PC-9 (cell line): ENCODE measurements at regions of chr3 and their contacts with region 1.

Region 1: DNA sequence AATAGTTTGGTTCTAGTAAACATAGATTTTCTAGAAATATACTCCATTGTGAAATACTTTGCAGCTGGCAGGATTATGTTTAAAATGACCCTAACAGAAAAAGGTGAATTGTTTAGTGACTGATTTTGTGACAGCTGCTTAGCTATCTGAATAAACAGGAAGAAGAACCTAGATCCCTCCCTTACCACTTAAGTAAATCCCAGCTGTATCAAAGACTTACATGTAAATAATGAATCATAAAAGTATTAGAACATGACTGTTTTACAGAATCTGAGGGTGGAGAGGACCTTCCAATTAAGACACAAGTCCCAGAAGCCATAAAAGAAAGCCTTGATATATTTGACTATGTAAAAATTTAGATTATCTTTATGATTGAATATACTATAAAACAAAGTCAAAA is 15.9 kb downstream of the SLC49A4 start:
- DNase-seq: no peak
- H3K4me3 ChIP-seq: no peak overlapping the region
- H3K27ac ChIP-seq: no peak overlapping the region
- H3K4me1 ChIP-seq: no peaks in the 10 kb centered on the region
- H3K27me3 ChIP-seq: no peaks in the 10 kb centered on the region
- CTCF ChIP-seq: no peak

Region 2: DNA sequence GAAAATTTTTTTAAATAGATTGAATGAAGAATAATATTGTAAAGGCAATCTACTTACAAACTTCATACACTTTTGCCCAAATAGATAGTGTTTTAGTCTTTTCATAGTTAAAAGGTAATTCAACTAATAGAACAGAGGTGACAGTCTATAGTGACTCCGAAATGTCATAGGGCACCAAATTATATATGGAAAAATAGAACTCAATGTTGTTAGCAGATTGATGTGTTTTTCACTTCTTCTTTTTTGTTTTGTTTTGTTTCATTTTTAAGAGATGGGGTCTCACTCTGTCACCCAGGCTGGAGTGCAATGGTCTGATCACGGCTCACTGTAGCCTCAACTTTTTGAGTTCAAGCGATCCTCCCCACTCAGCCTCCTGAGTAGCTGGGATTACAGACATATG is 485.0 kb before region 1 on chr3:
- CTCF ChIA-PET with region 1: no interaction called
- POLR2A ChIA-PET with region 1: interaction called, 14 read pairs
- intact Hi-C with region 1: no loop called
- DNase-seq: no peak
- H3K4me3 ChIP-seq: no peak overlapping the region
- H3K27ac ChIP-seq: no peak overlapping the region
- H3K4me1 ChIP-seq: no peaks in the 10 kb centered on the region
- H3K27me3 ChIP-seq: no peaks in the 10 kb centered on the region
- CTCF ChIP-seq: no peak

Region 3: DNA sequence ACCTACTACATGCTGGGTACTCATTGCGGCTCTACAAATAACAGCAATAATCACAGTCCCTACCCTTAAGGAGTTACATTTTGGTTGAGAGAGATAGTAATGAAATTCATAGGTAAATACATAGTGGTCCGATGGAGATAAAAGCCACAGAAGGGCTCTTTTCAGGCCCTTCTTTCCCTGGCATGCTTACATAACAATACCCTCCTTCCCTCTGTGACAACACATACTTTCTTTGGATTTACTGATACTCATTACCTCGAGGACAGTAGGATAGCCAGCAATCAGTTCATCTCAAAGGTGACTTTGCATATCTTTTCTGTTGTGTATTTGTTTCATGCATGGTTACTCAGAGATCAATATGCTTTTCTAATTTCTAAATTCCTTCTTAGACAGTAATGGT is 71.6 kb before region 1 on chr3:
- CTCF ChIA-PET with region 1: no interaction called
- POLR2A ChIA-PET with region 1: no interaction called
- intact Hi-C with region 1: no loop called
- DNase-seq: no peak
- H3K4me3 ChIP-seq: no peak overlapping the region
- H3K27ac ChIP-seq: no peak overlapping the region
- H3K4me1 ChIP-seq: no peaks in the 10 kb centered on the region
- H3K27me3 ChIP-seq: no peaks in the 10 kb centered on the region
- CTCF ChIP-seq: no peak

Region 4: DNA sequence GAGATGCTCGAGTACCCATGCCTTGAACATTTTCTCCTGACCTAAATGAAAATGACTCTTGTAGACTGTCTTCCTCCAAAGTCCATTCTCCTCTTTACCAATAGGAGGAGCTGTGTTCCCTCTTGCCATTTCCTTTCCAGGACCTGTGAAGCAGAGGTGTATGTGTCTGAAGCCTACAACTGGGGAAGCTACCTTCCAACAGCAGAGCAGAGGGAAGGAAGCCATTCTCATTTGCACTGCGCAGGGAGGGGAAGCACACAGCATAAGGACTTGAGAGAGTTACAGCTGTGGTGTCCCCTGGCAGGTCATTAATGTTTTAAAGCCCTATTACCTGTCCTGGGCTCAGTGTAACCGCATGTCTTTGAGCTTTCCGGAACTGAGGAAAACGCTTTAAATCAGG is 55.8 kb before region 1 on chr3:
- CTCF ChIA-PET with region 1: interaction called, 15 read pairs
- POLR2A ChIA-PET with region 1: no interaction called
- intact Hi-C with region 1: no loop called
- DNase-seq: peak; percentile 17 to 44
- H3K4me3 ChIP-seq: no peak overlapping the region
- H3K27ac ChIP-seq: no peak overlapping the region
- H3K4me1 ChIP-seq: no peaks in the 10 kb centered on the region
- H3K27me3 ChIP-seq: no peaks in the 10 kb centered on the region
- CTCF ChIP-seq: peak; percentile 79

Region 5: DNA sequence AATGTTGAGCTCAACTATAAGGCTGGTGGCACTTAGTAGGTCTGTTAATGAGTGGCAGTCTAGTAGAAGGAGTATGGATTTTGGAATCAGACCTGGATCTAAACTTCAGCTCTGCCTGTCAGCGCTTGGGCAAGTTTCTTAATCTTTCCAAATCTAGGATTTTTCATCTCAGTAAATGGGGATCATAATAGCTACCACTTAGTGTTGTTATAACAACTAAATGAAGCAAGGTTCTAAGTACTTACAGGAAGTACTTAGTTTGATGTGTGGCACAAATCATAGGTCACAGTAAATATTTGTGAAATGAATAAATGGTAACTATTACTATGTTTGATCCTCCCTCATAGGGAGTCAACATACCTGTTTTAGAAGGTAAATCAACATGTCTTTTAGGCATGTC is 15.5 kb after region 1 on chr3:
- CTCF ChIA-PET with region 1: no interaction called
- POLR2A ChIA-PET with region 1: no interaction called
- intact Hi-C with region 1: no loop called
- DNase-seq: no peak
- H3K4me3 ChIP-seq: no peak overlapping the region
- H3K27ac ChIP-seq: no peak overlapping the region
- H3K4me1 ChIP-seq: no peaks in the 10 kb centered on the region
- H3K27me3 ChIP-seq: no peaks in the 10 kb centered on the region
- CTCF ChIP-seq: no peak